Activated CD4-positive, alpha-beta memory T cell treated with anti-CD3 and anti-CD28 coated beads, Interleukin-2, amount 10 ng/mL, durations not matched to agents 7 days and 5 days (primary cell): ENCODE measurements at regions of chr20 and their contacts with region 1.

Region 1: DNA sequence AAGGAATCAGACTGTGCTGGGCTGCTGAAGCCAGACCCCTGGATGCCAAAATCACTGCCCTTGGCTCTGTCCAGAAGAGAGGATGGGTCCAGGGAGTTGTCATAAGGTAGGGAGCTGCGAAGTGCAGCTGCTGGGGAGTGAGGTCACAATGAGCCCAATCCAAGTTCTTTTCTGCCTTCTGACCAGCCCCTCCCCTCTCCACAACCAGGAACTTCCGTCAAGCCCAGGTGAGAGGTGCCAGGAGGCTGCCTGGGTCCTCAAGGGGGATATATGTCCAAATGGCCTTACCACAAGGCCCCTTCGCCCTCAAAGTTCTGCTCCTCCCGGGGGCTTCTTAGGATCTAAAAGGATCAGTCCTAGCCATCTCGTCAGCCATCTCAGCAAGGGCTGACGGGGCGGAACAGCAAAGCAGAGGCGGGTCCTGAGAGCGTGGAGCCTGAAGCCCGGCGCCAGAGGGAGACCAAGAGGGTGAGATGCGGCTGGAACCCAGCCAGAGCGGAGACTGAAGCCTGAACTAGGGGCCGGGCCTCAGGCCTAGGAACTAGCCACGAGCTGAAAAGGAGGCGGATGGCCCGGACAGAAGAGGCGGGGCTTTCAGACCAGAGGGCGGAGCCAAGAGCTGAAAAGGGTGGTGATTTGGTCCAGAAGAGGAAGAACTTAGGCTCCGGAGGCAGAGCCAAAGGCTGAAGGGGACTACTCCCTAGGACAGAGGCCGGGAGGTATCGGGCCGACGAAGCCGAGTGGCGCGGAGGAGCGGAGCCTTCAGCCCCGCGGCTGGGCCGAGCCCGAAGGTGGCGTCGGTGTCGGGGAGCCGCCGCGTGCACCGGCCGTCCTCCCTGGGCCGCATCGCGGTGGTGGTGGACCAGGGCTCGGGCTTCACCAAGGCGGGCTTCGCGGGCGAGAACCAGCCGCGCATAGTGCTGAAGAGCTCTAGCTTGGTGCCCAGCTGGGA is at the start of gene ACTL10:
- DNase-seq: peak; percentile 88
- H3K4me3 Mint-ChIP-seq: peak within 1 kb of the TSS; percentile 91
- H3K27ac Mint-ChIP-seq: peak within 1 kb of the TSS; percentile 90
- H3K4me1 Mint-ChIP-seq: peaks cover 58% of the 10 kb centered on the region
- H3K27me3 Mint-ChIP-seq: no peaks in the 10 kb centered on the region
- total RNA-seq, gene ACTL10: 3.7 to 4.5 TPM

Region 2: GRCh38 chr20:33460711-33461110 is 205.9 kb before region 1 on chr20:
- CTCF ChIA-PET with region 1: interaction called, 29 read pairs
- POLR2A ChIA-PET with region 1: interaction called, 4 read pairs
- DNase-seq: no peak
- H3K4me3 Mint-ChIP-seq: no peak overlapping the region
- H3K27ac Mint-ChIP-seq: no peak overlapping the region
- H3K4me1 Mint-ChIP-seq: no peaks in the 10 kb centered on the region
- H3K27me3 Mint-ChIP-seq: no peaks in the 10 kb centered on the region

Region 3: GRCh38 chr20:33554914-33555420 is 111.6 kb before region 1 on chr20:
- CTCF ChIA-PET with region 1: interaction called, 3 read pairs
- POLR2A ChIA-PET with region 1: interaction called, 14 read pairs
- DNase-seq: peak; percentile 39
- H3K4me3 Mint-ChIP-seq: peak overlapping the region; percentile 52
- H3K27ac Mint-ChIP-seq: peak overlapping the region; percentile 91
- H3K4me1 Mint-ChIP-seq: peaks cover 20% of the 10 kb centered on the region
- H3K27me3 Mint-ChIP-seq: no peaks in the 10 kb centered on the region

Region 4: DNA sequence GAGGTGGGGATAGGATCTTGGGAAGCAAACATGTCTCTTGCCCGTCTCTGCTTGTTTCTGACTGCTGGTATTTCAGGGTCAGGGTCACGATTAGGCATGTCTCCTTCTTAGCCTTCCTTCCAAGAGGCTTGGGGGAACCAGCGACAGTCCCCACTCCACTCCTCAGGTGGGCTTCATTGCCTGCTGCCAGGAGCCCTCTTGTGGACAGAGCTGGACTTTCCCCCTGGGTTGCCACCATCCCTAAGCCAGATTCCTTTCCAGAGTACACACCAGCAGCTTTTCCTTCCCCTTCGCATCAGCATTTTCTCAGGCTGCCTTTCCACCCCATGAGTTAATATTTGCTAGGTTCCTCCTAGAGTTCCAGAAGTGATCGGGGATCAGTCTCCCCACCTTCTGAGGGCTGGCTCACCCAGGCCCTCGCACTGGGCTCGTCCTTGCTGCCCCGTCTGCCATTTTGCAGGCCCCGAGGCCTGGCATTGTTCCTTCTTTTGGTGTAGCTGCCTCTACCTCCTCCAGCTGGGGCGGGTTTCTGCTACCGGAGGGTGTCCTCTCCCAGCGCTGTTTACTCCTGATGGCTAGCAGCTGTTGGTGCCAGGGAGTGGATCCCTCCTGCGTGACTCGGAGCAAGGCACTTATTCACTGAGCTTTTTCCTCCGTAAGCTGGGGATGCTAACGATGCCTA is 13.2 kb before region 1 on chr20:
- CTCF ChIA-PET with region 1: interaction called, 6 read pairs
- POLR2A ChIA-PET with region 1: interaction called, 43 read pairs
- DNase-seq: peak; percentile 44
- H3K4me3 Mint-ChIP-seq: no peak overlapping the region
- H3K27ac Mint-ChIP-seq: no peak overlapping the region
- H3K4me1 Mint-ChIP-seq: peaks cover 44% of the 10 kb centered on the region
- H3K27me3 Mint-ChIP-seq: no peaks in the 10 kb centered on the region

Region 5: DNA sequence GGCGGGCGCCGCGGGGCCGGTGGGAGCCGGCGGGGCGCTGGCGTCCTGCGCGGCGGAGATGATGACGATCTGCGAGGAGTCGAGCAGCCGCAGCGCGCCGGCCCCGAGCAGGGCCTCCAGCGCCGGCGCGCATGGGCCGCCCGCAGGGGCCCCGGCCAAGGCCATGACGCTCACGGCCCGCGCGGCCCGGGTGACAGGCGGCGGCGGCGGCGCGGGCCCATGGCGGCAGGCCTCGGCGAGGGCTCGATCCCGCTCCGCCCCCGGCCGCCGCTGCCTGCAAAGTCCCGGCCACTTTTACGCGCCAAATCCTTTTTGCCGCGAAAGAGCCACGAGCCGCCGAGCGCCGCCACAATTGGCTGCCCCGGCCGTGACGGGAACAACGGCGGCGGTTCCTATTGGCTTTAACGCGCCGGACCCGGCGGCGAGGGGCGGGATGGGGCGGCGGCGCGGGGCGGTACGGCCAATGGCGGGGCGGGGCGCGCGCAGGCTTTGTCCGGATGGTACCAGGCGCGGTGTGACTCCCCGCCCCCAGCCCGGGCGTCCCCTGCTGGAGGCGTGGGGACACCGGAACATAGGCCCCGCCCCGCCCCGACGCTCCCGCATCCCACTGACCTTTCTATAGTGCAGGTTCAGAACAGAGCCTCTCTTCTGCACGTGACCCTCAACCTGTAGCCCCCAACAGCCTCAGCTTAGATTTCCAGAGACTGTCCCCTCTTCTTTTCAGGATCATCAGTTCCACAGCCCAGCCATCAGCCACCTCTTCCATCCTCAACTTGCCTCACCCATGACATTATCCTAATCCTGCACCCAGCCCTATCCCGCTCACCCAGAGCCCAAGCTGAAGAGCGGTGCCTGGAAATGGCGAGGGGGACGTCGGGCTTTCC is 19.8 kb after region 1 on chr20 and contains the start of gene E2F1:
- CTCF ChIA-PET with region 1: interaction called, 63 read pairs
- POLR2A ChIA-PET with region 1: interaction called, 312 read pairs
- DNase-seq: peak; percentile 98
- H3K4me3 Mint-ChIP-seq: peak within 1 kb of the TSS; percentile 94
- H3K27ac Mint-ChIP-seq: peak within 1 kb of the TSS; percentile 94
- H3K4me1 Mint-ChIP-seq: peaks cover 81% of the 10 kb centered on the region
- H3K27me3 Mint-ChIP-seq: no peaks in the 10 kb centered on the region
- total RNA-seq, gene E2F1: 60.0 to 61.7 TPM

Region 6: DNA sequence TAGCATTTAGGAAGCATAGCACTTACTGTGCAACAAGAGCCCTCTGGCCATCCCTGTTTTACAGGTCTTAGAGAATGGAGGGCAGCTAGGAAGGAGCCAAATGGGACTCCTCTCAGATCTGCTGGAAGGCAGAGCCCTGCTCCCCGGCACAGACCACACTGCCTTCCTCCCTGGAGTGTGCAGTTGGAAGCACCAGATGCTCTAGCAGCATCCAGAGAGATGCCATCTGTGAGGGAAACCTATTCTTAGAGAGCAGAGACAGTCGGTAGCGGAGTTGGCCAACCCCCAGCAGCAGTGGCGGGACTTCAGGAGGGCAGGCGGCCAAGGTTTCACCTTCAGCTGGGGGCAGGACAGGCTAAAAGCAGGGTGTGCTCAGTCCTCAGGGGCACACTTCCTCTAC is 36.3 kb after region 1 on chr20:
- CTCF ChIA-PET with region 1: no interaction called
- POLR2A ChIA-PET with region 1: no interaction called
- DNase-seq: no peak
- H3K4me3 Mint-ChIP-seq: no peak overlapping the region
- H3K27ac Mint-ChIP-seq: no peak overlapping the region
- H3K4me1 Mint-ChIP-seq: no peaks in the 10 kb centered on the region
- H3K27me3 Mint-ChIP-seq: no peaks in the 10 kb centered on the region

Region 7: DNA sequence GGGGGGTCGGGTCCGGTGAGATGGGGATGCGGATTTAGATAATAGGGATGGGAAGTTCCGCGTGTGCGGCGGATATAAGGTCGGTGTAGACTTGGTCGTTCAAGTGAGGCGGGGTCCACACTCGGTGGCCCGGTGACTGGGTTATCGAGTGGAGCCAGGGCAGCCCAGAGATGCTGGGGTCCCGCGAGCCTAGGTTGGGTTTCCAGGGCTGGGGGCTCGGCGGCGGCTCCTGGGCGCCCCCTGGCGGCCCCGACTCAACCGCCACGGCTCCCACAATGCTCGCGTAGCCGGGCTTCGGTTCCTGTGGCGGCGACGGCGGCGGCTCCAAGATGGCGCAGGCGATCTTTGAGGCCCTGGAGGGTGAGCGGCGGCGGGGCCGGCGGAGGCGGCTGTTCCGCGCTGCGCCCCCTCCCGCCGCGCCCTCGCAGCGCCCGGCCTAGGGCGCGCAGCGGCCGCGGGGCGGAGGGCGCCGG is 65.2 kb after region 1 on chr20 and contains the start of gene ZNF341:
- CTCF ChIA-PET with region 1: interaction called, 6 read pairs
- POLR2A ChIA-PET with region 1: interaction called, 18 read pairs
- DNase-seq: peak; percentile 91
- H3K4me3 Mint-ChIP-seq: peak within 1 kb of the TSS; percentile 80
- H3K27ac Mint-ChIP-seq: peak within 1 kb of the TSS; percentile 91
- H3K4me1 Mint-ChIP-seq: peaks cover 28% of the 10 kb centered on the region
- H3K27me3 Mint-ChIP-seq: no peaks in the 10 kb centered on the region
- total RNA-seq, gene ZNF341: 5.6 to 5.8 TPM

Region 8: DNA sequence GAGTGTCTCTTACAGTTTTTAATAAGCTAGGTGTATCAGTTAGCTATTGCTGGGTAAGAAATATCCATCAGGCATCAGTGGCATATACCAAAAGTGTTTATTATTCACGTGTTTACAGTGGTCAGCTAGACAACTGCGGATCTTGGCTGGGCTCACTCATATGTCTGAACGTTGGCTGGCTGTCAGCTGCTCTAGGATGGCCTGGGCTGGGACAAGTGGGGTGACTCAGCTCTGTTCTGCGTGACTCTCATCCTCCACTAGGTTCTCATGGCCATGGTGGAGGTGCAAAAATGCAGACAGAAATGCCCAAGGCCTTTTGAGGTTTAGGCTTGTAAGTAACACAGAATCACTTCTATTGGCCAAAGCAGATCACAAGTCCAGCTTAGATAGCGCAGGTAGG is 87.2 kb after region 1 on chr20:
- CTCF ChIA-PET with region 1: no interaction called
- POLR2A ChIA-PET with region 1: no interaction called
- DNase-seq: no peak
- H3K4me3 Mint-ChIP-seq: no peak overlapping the region
- H3K27ac Mint-ChIP-seq: no peak overlapping the region
- H3K4me1 Mint-ChIP-seq: no peaks in the 10 kb centered on the region
- H3K27me3 Mint-ChIP-seq: no peaks in the 10 kb centered on the region